ENCODE measurements at regions of chr4 and their contacts with region 1.

Region 1: DNA sequence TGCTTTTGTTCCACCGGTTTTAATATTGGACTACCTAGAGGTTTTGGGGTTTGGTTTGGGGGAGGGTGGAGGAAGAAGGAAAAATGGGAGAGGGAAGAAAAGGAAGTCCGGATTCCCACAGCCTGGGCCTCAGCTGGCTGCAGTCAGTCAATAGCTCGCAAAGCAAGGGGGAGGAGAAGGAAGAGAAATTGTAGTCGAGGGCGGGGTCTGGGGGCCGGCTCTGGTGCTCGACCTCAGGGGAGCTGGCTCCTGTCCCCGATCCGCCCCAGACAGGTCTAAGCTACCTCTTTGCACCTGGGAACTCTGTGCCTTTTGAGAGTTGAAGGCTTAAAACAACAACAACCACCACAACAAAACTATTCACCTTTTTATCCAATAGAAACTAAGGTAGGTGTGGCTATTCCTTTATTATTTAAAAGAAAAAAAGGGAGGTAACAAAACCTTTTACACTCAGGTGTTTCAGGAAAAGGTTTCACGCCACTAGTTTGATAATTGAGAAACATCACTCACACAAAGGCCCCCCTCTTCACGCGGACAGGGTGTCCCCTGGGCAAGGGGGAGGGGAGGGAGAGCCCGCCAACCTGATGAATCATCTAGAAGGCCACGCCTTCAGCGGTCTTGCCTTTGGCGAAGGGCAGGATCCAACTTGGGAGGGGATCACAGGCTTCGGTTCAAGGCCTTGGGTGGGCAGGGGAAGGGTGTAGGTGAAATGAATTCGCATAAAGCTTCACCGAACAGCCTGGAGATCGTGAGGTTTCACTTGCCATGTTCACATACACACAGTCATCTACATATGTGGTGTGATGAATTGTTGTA is 1.6 kb upstream of the LNX1 start:
- DNase-seq: peak; percentile 69 to 77
- H3K4me3 ChIP-seq: peak overlapping the region; percentile 58; the same call in 1 of the 2 replicates
- H3K27ac ChIP-seq: peak overlapping the region; percentile 62
- H3K4me1 ChIP-seq: peaks cover 27% of the 10 kb centered on the region
- H3K27me3 ChIP-seq: no peaks in the 10 kb centered on the region
- CTCF ChIP-seq: no peak

Region 2: DNA sequence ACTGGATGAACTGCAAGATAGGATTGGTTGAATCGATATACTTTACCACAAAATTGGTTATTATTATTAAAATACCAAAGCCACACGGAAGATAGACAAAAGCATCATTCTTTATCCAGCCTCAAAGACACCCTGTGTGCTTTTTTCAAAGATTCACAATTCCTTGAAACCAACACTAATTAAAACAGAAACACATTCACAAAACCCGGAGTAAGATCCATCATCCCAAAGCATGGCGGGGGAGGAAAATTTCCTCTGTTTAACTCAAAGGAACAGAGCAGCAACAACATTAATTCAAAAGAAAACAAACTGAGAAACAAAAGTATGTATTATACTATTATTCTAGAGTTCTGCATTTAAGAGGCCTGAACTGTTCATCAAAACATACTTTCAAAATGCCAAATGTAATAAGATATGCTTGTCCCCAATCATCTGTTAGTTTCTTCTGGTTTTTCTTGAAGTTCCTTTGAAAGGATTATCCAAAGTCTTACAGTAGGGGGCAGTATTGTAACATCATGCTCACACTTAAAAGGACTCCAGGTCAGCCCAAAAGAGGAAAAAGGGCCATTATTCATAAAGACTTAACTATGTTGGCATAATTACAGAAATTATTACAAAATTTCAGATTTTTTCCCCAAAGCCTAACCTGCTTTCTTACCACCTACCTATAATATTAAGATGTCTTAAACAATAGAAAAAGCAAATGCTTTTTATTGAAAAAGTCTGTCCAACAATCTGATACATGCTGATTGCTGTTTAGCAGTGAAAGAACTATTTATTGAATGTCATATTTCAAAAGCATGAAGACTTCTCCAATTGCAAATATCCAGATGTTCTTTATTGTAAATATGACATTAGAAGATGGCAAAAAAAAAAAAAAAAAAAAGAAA is 395.8 kb before region 1 on chr4:
- CTCF ChIA-PET with region 1: no interaction called
- POLR2A ChIA-PET with region 1: no interaction called
- intact Hi-C with region 1: loop called (anchors 1 kb)
- DNase-seq: no peak
- H3K4me3 ChIP-seq: no peak overlapping the region
- H3K27ac ChIP-seq: no peak overlapping the region
- H3K4me1 ChIP-seq: no peaks in the 10 kb centered on the region
- H3K27me3 ChIP-seq: no peaks in the 10 kb centered on the region
- CTCF ChIP-seq: peak; percentile 88

Region 3: GRCh38 chr4:53365486-53366300 is 227.2 kb before region 1 on chr4 and contains the start of gene SCFD2:
- CTCF ChIA-PET with region 1: no interaction called
- POLR2A ChIA-PET with region 1: no interaction called
- intact Hi-C with region 1: loop called (anchors 5 kb)
- DNase-seq: peak; percentile 90 to 91
- H3K4me3 ChIP-seq: peak within 1 kb of the TSS; percentile 72
- H3K27ac ChIP-seq: no peak within 1 kb of the TSS
- H3K4me1 ChIP-seq: peaks cover 18% of the 10 kb centered on the region; the same call in 1 of the 2 replicates
- H3K27me3 ChIP-seq: 0 out of 2 replicates have a peak, but pooled peaks cover 5% of the 10 kb centered on the region
- CTCF ChIP-seq: no peak
- total RNA-seq, gene SCFD2: 7.0 and 8.1 TPM in 2 replicates

Region 4: DNA sequence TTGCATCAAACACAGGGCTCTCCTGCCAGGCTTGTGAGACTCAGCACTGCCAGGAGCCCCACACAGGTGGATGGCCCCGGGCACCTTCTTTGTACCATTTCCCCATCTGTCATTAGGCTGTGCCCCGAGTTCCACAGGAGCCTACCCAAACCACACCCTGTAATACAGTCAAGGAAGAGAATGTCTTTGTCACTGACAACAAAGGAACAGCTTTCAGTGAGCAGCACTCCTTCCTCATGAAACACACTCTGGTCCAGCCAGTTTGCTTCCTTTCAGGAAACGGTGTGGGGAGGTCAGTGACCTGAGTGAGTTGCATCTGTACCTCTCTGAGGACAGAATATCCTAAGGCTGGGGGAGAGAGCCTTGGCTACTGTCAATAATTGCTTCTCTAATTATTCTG is 55.3 kb before region 1 on chr4:
- CTCF ChIA-PET with region 1: no interaction called
- POLR2A ChIA-PET with region 1: no interaction called
- intact Hi-C with region 1: loop called (anchors 2 kb)
- DNase-seq: peak; percentile 52 to 87
- H3K4me3 ChIP-seq: no peak overlapping the region
- H3K27ac ChIP-seq: no peak overlapping the region
- H3K4me1 ChIP-seq: 0 out of 2 replicates have a peak, but pooled peaks cover 12% of the 10 kb centered on the region
- H3K27me3 ChIP-seq: no peaks in the 10 kb centered on the region
- CTCF ChIP-seq: no peak

Region 5: GRCh38 chr4:53563824-53564223 is 29.1 kb before region 1 on chr4:
- CTCF ChIA-PET with region 1: no interaction called
- POLR2A ChIA-PET with region 1: no interaction called
- intact Hi-C with region 1: no loop called
- DNase-seq: no peak
- H3K4me3 ChIP-seq: no peak overlapping the region
- H3K27ac ChIP-seq: no peak overlapping the region
- H3K4me1 ChIP-seq: no peaks in the 10 kb centered on the region
- H3K27me3 ChIP-seq: no peaks in the 10 kb centered on the region
- CTCF ChIP-seq: no peak

Region 6: GRCh38 chr4:53633608-53634007 is 40.7 kb after region 1 on chr4:
- CTCF ChIA-PET with region 1: no interaction called
- POLR2A ChIA-PET with region 1: interaction called, 11 read pairs
- intact Hi-C with region 1: no loop called
- DNase-seq: no peak
- H3K4me3 ChIP-seq: no peak overlapping the region
- H3K27ac ChIP-seq: no peak overlapping the region
- H3K4me1 ChIP-seq: no peaks in the 10 kb centered on the region
- H3K27me3 ChIP-seq: 0 out of 2 replicates have a peak, but pooled peaks cover 4% of the 10 kb centered on the region
- CTCF ChIP-seq: no peak